GM10248 (cell line): ENCODE measurements at regions of chr5 and their contacts with region 1.

Region 1: GRCh38 chr5:77463905-77464304 is 28.2 kb downstream of the WDR41 start:
- DNase-seq: no peak
- CTCF ChIP-seq: no peak

Region 2: GRCh38 chr5:77292026-77292757 is 171.7 kb before region 1 on chr5:
- CTCF ChIA-PET with region 1: no interaction called
- POLR2A ChIA-PET with region 1: no interaction called
- DNase-seq: no peak
- CTCF ChIP-seq: no peak

Region 3: DNA sequence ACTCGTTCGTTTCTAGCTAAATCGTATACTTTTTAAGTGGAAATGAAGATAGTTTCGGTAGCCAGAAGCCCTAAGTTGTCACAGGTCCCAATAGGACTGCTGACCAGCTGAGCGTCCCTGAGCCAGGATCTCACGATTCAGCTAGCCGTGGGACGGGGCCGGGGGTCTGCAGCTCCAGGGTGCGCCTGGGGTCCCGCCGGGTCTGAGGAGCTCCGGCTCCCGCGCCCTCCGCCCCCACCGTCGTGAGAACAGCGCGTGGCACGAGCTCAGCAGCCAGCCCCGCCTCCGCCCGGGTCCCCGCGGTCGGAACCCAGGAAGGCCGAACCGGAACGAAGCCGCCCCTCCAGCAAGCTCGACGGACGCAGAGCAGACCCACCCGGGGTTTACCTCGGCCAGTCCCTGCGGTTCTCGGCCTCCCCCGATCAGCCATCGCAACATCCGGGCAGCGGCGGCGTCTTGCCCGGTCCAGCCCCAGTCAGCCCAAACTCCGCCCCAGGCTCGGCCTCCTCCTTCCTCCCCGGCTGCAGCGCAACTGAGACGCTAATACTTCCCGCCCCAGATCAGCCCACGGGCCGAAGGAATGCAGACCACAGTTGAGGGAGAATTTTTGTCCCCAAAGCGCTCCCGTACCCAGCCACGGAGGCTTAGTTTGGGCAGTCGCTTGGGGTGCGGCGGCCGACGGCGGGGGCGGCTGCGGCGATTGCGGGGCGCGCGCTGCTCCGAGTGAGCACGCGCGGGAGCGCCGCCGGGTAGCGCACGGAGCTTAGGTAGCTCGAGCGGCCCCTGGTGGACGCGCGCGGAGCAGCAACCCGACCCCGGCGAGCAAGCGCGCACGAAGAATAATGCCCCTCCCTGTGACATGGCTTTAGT is 28.1 kb after region 1 on chr5 and contains the start of gene WDR41:
- CTCF ChIA-PET with region 1: interaction called, 19 read pairs
- POLR2A ChIA-PET with region 1: no interaction called
- DNase-seq: peak; percentile 90
- CTCF ChIP-seq: peak; percentile 94